Right ventricle myocardium superior (tissue), 1 donor: ENCODE measurements at regions of chr2 and their contacts with region 1.

Region 1: GRCh38 chr2:190088917-190089316 is 26.4 kb upstream of the MSTN start:
- DNase-seq: no peak
- ATAC-seq: peak; percentile 81

Region 2: GRCh38 chr2:189060096-189060652 is 1028.7 kb before region 1 on chr2:
- intact Hi-C with region 1: no loop called
- DNase-seq: no peak
- ATAC-seq: no peak

Region 3: GRCh38 chr2:190235101-190235500 is 146.2 kb after region 1 on chr2:
- intact Hi-C with region 1: no loop called
- DNase-seq: no peak
- ATAC-seq: no peak

Region 4: GRCh38 chr2:190270298-190270697 is 181.4 kb after region 1 on chr2:
- intact Hi-C with region 1: loop called (anchors 5 kb)
- DNase-seq: no peak
- ATAC-seq: no peak

Region 5: GRCh38 chr2:190369635-190370034 is 280.7 kb after region 1 on chr2:
- intact Hi-C with region 1: loop called (anchors 5 kb)
- DNase-seq: no peak
- ATAC-seq: no peak

Region 6: GRCh38 chr2:190507135-190507534 is 418.2 kb after region 1 on chr2:
- intact Hi-C with region 1: loop called (anchors 10 kb)
- DNase-seq: no peak
- ATAC-seq: no peak